Mammary epithelial cell (primary cell): ENCODE measurements at regions of chr15 and their contacts with region 1.

Region 1: DNA sequence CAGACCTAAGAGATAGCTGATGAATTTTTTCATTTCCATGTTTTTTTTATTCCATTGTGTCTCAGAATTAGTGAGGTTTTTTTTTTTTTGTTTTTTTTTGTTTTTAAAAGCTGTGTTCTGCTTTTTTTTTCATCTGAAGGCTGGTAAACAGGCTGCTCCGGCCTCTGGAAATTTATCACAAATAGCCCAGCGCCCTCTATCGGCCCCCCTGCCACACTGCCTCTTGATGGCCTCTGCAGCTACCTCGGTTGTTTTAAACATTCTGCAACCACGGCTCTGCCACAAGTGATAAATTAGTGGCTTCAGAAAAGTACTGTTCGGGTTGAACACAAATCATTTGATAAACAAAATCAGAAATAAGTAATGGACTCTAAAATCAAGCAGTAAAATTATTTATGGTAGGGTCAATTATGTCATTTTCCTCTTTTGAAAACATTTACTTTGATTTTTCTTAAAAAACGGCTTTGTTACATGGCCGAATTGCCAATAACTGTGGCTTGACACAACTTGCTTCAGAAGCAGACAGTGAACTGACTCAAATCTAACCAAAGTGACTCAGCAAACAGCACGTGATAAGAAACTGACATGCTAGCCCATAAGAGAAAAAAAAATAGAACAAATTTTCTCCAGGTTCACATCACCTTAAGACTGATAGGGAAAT is 87.8 kb downstream of the RSL24D1 start:
- DNase-seq: peak; percentile 47
- H3K4me3 ChIP-seq: no peak overlapping the region
- H3K27ac ChIP-seq: no peak overlapping the region
- H3K4me1 ChIP-seq: no peaks in the 10 kb centered on the region
- H3K27me3 ChIP-seq: no peaks in the 10 kb centered on the region
- CTCF ChIP-seq: peak; percentile 74 to 76

Region 2: DNA sequence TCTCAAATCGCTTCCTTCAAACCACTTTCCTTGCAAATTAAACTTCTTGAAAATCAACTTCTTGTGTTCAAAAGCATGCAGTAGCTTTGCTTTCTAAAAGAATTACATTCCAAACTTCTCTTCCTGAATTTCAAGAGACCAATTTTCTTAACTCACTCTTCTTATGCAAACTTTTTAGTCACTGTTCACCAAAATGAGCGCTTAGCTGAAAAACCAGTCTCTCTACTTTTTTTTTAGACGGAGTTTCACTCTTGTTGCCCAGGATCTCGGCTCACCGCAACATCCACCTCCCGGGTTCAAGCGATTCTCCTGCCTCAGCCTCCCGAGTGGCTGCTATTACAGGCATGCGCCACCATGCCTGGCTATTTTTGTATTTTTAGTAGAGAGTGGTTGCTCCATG is 1209.6 kb before region 1 on chr15:
- CTCF ChIA-PET with region 1: no interaction called
- dilution Hi-C with region 1: no loop called
- in situ Hi-C with region 1: no loop called
- intact Hi-C with region 1: loop called (anchors 5 kb)
- DNase-seq: no peak
- H3K4me3 ChIP-seq: no peak overlapping the region
- H3K27ac ChIP-seq: no peak overlapping the region
- H3K4me1 ChIP-seq: no peaks in the 10 kb centered on the region
- H3K27me3 ChIP-seq: no peaks in the 10 kb centered on the region
- CTCF ChIP-seq: no peak

Region 3: GRCh38 chr15:53962332-53963241 is 1146.4 kb before region 1 on chr15:
- CTCF ChIA-PET with region 1: interaction called, 3 read pairs
- dilution Hi-C with region 1: no loop called
- in situ Hi-C with region 1: no loop called
- intact Hi-C with region 1: loop called (anchors 5 kb)
- DNase-seq: no peak
- H3K4me3 ChIP-seq: no peak overlapping the region
- H3K27ac ChIP-seq: no peak overlapping the region
- H3K4me1 ChIP-seq: no peaks in the 10 kb centered on the region
- H3K27me3 ChIP-seq: peaks cover 4% of the 10 kb centered on the region
- CTCF ChIP-seq: peak; percentile 74

Region 4: GRCh38 chr15:53976844-53977392 is 1132.1 kb before region 1 on chr15:
- CTCF ChIA-PET with region 1: no interaction called
- dilution Hi-C with region 1: no loop called
- in situ Hi-C with region 1: no loop called
- intact Hi-C with region 1: loop called (anchors 2 kb)
- DNase-seq: no peak
- H3K4me3 ChIP-seq: no peak overlapping the region
- H3K27ac ChIP-seq: no peak overlapping the region
- H3K4me1 ChIP-seq: peaks cover 8% of the 10 kb centered on the region
- H3K27me3 ChIP-seq: peaks cover 8% of the 10 kb centered on the region
- CTCF ChIP-seq: peak; percentile 24 to 57

Region 5: GRCh38 chr15:55168329-55168974 is 59.5 kb after region 1 on chr15:
- CTCF ChIA-PET with region 1: no interaction called
- dilution Hi-C with region 1: no loop called
- in situ Hi-C with region 1: no loop called
- intact Hi-C with region 1: loop called (anchors 2 kb)
- DNase-seq: peak; percentile 54
- H3K4me3 ChIP-seq: no peak overlapping the region
- H3K27ac ChIP-seq: no peak overlapping the region
- H3K4me1 ChIP-seq: no peaks in the 10 kb centered on the region
- H3K27me3 ChIP-seq: no peaks in the 10 kb centered on the region
- CTCF ChIP-seq: peak; percentile 63 to 81

Region 6: GRCh38 chr15:55279746-55280351 is 170.9 kb after region 1 on chr15:
- CTCF ChIA-PET with region 1: interaction called, 12 read pairs
- dilution Hi-C with region 1: no loop called
- in situ Hi-C with region 1: no loop called
- intact Hi-C with region 1: no loop called
- DNase-seq: peak; percentile 84
- H3K4me3 ChIP-seq: no peak overlapping the region
- H3K27ac ChIP-seq: peak overlapping the region; percentile 26
- H3K4me1 ChIP-seq: peaks cover 31% of the 10 kb centered on the region
- H3K27me3 ChIP-seq: no peaks in the 10 kb centered on the region
- CTCF ChIP-seq: no peak